Caco-2 (cell line): ENCODE measurements at regions of chr10 and their contacts with region 1.

Region 1: GRCh38 chr10:72273410-72274212 is at the start of gene DDIT4:
- DNase-seq: peak; percentile 99 to 100
- H3K4me3 ChIP-seq: peak within 1 kb of the TSS; percentile 80
- H3K4me3 Mint-ChIP-seq: peak within 1 kb of the TSS; percentile 94
- H3K27ac Mint-ChIP-seq: peak within 1 kb of the TSS; percentile 99
- H3K4me1 ChIP-seq: peaks cover 22% of the 10 kb centered on the region
- H3K4me1 Mint-ChIP-seq: peaks cover 39% of the 10 kb centered on the region
- H3K27me3 ChIP-seq: no peaks in the 10 kb centered on the region
- H3K27me3 Mint-ChIP-seq: no peaks in the 10 kb centered on the region
- CTCF ChIP-seq: no peak
- total RNA-seq, gene DDIT4: 152 and 155 TPM in 2 replicates

Region 2: DNA sequence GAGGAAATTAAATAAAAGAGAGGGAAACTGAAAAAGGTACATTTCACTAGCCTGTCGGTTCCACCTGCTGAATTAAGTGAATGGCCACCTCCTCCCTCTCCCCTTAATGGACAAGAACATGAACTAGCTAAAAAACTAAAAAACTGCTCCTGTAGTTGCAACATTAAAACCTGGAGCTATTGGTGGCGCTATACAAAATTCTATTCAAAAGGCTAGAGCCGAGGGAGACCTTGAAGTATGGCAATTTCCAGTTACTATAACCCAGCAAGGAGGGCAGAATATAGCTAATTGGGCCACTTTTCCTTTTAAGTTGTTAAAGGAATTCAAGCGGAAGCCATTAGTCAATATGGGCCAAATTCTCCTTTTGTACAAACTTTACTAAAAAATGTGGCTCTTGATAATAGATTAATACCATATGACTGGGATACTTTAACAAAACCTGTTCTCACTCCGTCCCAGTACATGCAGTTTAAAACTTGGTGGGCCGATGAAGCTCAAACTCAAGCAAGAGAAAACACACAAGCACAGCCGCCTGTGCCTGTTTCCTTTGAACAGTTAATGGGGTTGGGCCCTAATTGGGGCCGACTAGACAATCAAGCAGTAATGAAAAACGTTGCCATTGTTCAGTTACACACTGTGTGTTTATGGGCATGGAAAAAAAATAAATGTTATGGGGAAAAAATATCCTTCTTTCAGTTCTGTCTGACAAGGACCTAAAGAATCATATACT is 315.9 kb before region 1 on chr10:
- CTCF ChIA-PET with region 1: no interaction called
- POLR2A ChIA-PET with region 1: no interaction called
- intact Hi-C with region 1: loop called (anchors 2 kb)
- DNase-seq: peak in 1 of 2 experiments; percentile 7
- H3K4me3 ChIP-seq: no peak overlapping the region
- H3K4me3 Mint-ChIP-seq: no peak overlapping the region
- H3K27ac Mint-ChIP-seq: peak overlapping the region; percentile 56
- H3K4me1 ChIP-seq: peaks cover 43% of the 10 kb centered on the region
- H3K4me1 Mint-ChIP-seq: peaks cover 35% of the 10 kb centered on the region
- H3K27me3 ChIP-seq: no peaks in the 10 kb centered on the region
- H3K27me3 Mint-ChIP-seq: no peaks in the 10 kb centered on the region
- CTCF ChIP-seq: no peak

Region 3: DNA sequence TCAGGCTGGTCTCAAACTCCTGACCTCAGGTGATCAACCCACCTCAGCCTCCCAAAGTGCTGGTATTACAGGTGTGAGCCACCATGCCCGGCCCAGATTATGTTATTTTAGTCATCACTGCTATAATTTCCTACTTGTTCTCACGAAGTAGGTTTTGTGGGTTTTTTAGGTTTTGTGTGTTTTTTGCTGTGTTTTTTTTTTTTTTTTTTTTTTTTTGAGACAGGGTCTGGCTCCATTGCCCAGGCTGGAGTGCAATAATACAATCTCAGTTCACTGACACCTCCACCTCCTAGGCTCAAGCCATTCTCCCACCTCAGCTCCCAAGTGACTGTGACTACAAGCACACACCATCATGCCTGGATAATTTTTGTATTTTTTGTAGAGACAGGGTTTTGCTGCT is 78.7 kb before region 1 on chr10:
- CTCF ChIA-PET with region 1: no interaction called
- POLR2A ChIA-PET with region 1: no interaction called
- intact Hi-C with region 1: no loop called
- DNase-seq: no peak
- H3K4me3 ChIP-seq: no peak overlapping the region
- H3K4me3 Mint-ChIP-seq: no peak overlapping the region
- H3K27ac Mint-ChIP-seq: no peak overlapping the region
- H3K4me1 ChIP-seq: no peaks in the 10 kb centered on the region
- H3K4me1 Mint-ChIP-seq: no peaks in the 10 kb centered on the region
- H3K27me3 ChIP-seq: no peaks in the 10 kb centered on the region
- H3K27me3 Mint-ChIP-seq: no peaks in the 10 kb centered on the region
- CTCF ChIP-seq: no peak

Region 4: DNA sequence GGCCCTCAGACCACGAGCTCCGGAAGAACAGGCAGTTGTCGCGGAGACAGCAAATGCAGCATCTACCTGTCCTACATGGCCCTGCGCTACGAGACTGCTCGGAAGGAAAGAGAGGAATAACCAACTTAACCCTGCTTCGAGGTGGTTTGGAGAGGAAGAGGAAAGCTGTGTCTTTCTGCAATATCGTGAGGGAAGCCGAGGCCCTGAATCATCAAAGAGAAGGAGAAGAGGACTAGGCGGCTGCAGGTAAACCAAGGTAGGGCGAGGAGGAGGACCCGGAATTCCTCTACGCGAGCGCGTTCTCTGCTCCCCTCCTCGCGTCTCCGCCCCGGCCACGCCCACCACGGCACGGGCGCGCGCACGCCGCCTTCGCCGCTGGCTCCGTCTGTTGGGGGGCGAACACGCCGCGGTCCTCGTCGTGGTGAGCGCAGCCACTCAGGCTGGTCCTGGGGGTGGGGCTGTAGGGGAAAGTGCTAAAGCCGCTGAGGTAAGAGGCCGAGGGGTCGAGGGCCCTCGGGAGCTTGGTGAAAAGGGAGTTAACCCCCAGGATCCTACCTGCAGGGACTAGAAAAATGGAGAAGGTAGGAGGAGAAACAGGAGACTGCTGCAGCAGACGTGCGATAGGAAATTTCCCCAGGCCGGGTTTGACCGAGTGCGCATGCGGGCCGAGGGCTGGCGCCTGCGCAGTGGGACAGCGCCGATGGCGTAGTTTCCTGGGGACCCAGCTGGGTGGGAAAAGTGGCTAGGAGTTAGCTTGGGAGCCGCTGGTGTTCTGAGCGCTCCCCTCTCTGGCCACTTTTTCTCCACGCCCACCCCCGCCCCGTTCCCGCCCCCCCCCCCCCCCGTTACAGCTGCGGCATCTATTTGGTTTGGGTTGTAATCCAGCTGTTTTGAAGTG is 57.7 kb before region 1 on chr10 and contains the starts of genes ANAPC16 and ASCC1:
- CTCF ChIA-PET with region 1: no interaction called
- POLR2A ChIA-PET with region 1: interaction called, 22 read pairs
- intact Hi-C with region 1: loop called (anchors 1 kb)
- DNase-seq: peak; percentile 94 to 99
- H3K4me3 ChIP-seq: peak within 1 kb of the TSS; percentile 77
- H3K4me3 Mint-ChIP-seq: peak within 1 kb of the TSS; percentile 94
- H3K27ac Mint-ChIP-seq: peak within 1 kb of the TSS; percentile 92
- H3K4me1 ChIP-seq: peaks cover 13% of the 10 kb centered on the region; the same call in 1 of the 2 replicates
- H3K4me1 Mint-ChIP-seq: peaks cover 8% of the 10 kb centered on the region
- H3K27me3 ChIP-seq: no peaks in the 10 kb centered on the region
- H3K27me3 Mint-ChIP-seq: no peaks in the 10 kb centered on the region
- CTCF ChIP-seq: no peak
- total RNA-seq, gene ANAPC16: 134 and 144 TPM in 2 replicates
- total RNA-seq, gene ASCC1: 60.1 and 73.7 TPM in 2 replicates

Region 5: GRCh38 chr10:72248468-72249151 is 25.0 kb before region 1 on chr10:
- CTCF ChIA-PET with region 1: interaction called, 3 read pairs
- POLR2A ChIA-PET with region 1: interaction called, 7 read pairs
- intact Hi-C with region 1: loop called (anchors 1 kb)
- DNase-seq: no peak
- H3K4me3 ChIP-seq: no peak overlapping the region
- H3K4me3 Mint-ChIP-seq: no peak overlapping the region
- H3K27ac Mint-ChIP-seq: no peak overlapping the region
- H3K4me1 ChIP-seq: peaks cover 26% of the 10 kb centered on the region
- H3K4me1 Mint-ChIP-seq: peaks cover 14% of the 10 kb centered on the region
- H3K27me3 ChIP-seq: no peaks in the 10 kb centered on the region
- H3K27me3 Mint-ChIP-seq: no peaks in the 10 kb centered on the region
- CTCF ChIP-seq: no peak

Region 6: DNA sequence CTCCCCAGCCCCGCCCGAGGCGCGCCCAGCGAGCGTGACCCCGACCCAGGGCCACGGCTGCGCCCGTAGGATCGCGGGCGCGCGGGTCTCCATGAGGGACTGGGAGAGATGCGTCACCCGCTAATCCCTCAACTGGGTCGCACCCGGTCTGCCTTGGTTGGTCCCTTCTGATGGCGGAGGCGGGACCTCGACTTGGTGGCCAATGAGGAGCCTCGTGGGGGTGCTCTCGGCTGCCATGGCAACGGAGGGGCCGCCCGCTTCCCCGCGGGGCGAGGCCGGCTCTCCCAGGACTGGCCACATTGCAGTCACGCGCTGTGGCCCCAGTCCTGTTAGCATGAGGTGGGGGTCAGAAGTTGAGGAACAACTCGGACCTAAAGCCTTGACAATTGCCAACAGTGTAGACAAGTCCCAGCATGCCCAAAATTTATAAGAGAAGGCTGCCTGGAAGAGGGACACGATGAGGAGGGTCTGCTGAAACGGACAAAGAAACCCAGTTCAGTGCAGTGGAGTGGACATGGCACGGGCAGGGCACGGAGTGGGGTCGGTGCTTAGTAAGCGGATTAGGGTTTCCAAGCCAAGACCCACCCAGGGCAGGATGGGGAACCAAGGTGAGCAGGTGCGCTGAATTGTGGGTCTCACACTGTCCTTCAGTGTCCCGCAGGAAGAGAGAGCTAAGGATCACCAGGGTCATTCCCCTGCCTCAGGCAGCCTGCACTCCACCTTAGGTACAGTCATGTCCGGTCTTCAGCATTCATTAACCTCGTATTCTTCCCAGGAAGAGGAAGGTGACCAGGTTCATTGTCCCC is 24.6 kb after region 1 on chr10:
- CTCF ChIA-PET with region 1: interaction called, 4 read pairs
- POLR2A ChIA-PET with region 1: interaction called, 13 read pairs
- intact Hi-C with region 1: loop called (anchors 1 kb)
- DNase-seq: peak; percentile 99
- H3K4me3 ChIP-seq: peak overlapping the region; percentile 55
- H3K4me3 Mint-ChIP-seq: peak overlapping the region; percentile 86
- H3K27ac Mint-ChIP-seq: peak overlapping the region; percentile 99
- H3K4me1 ChIP-seq: peaks cover 20% of the 10 kb centered on the region
- H3K4me1 Mint-ChIP-seq: peaks cover 20% of the 10 kb centered on the region
- H3K27me3 ChIP-seq: no peaks in the 10 kb centered on the region
- H3K27me3 Mint-ChIP-seq: no peaks in the 10 kb centered on the region
- CTCF ChIP-seq: no peak

Region 7: DNA sequence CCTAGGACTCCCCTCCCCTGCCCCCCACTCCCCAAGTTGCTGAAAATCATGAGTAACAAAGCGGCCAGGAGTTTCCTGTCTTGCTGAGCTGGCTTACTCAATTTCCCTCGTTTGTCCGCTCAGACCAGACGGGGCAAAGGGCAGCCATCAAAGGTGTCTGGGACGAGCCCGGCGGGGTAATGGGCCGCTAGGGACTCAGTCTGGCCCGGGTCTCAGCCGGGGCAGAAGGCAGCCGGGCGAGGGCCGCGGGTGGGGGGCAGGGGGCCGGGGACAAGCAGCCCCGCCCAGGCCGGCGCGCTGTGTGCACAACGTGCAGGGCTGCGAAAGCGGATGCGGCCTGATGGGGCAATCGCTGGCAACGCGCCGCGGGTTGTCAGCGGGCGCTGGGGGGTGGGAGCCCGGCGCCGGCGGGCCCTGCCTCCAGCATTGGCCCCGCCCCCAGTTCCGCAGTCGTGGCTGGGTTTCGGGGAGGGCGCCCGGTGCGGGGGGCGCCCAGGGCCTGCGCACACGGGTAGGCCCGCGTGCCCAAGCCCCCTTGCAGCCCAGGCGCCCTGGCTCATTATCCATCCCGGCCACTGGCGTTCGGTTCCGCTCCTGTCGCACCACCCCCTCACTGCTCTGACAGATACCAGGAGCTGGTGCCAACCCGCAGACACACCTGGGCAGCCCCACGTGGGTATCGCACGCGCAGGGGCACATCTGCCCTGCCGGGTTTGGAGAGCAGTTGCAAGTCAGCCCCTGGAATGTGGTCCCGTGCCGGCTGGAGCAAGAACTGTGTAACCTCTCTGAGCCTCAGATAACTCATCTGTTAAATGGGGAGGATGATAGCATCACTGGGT is 46.0 kb after region 1 on chr10:
- CTCF ChIA-PET with region 1: interaction called, 10 read pairs
- POLR2A ChIA-PET with region 1: interaction called, 127 read pairs
- intact Hi-C with region 1: loop called (anchors 1 kb)
- DNase-seq: peak; percentile 88 to 98
- H3K4me3 ChIP-seq: peak overlapping the region; percentile 31
- H3K4me3 Mint-ChIP-seq: peak overlapping the region; percentile 60
- H3K27ac Mint-ChIP-seq: peak overlapping the region; percentile 99
- H3K4me1 ChIP-seq: peaks cover 44% of the 10 kb centered on the region
- H3K4me1 Mint-ChIP-seq: peaks cover 49% of the 10 kb centered on the region
- H3K27me3 ChIP-seq: no peaks in the 10 kb centered on the region
- H3K27me3 Mint-ChIP-seq: no peaks in the 10 kb centered on the region
- CTCF ChIP-seq: no peak

Region 8: DNA sequence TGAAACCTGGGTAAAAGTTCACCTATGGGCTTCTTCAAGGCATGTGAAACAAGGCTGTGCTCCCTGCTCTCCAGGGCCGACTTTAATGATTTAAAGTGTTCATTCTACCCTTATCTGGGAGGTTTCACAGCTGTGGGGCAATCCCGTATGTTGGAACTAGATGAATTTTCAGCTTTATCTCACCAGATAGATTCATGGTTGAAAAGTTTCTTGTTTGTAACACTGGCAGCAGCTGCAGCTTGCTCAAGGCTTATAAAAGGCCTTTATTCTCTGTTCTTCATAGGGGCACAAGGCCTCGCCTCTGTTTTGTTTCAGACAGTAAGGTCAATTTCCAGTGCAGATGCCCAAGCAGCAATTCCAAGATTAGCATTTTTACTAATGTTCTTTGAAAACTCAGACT is 151.5 kb after region 1 on chr10:
- CTCF ChIA-PET with region 1: no interaction called
- POLR2A ChIA-PET with region 1: no interaction called
- intact Hi-C with region 1: no loop called
- DNase-seq: no peak
- H3K4me3 ChIP-seq: no peak overlapping the region
- H3K4me3 Mint-ChIP-seq: no peak overlapping the region
- H3K27ac Mint-ChIP-seq: no peak overlapping the region
- H3K4me1 ChIP-seq: no peaks in the 10 kb centered on the region
- H3K4me1 Mint-ChIP-seq: peaks cover 8% of the 10 kb centered on the region
- H3K27me3 ChIP-seq: no peaks in the 10 kb centered on the region
- H3K27me3 Mint-ChIP-seq: no peaks in the 10 kb centered on the region
- CTCF ChIP-seq: no peak